K562 (cell line): ENCODE measurements at regions of chrX and their contacts with region 1.

Region 1: GRCh38 chrX:119036107-119037029 is 36.4 kb upstream of the CT47C1 start:
- DNase-seq: no peak
- ATAC-seq: no peak
- H3K4me3 ChIP-seq: no peak overlapping the region
- H3K27ac ChIP-seq: no peak overlapping the region
- H3K4me1 ChIP-seq: peaks cover 0 to 6% of the 10 kb centered on the region in 2 experiments; a peak in 2 of 5 replicates
- H3K27me3 ChIP-seq: no peaks in the 10 kb centered on the region
- CTCF ChIP-seq: no peak
- EP300 ChIP-seq: no peak
- POLR2A ChIP-seq: no peak
- RAD21 ChIP-seq: no peak

Region 2: DNA sequence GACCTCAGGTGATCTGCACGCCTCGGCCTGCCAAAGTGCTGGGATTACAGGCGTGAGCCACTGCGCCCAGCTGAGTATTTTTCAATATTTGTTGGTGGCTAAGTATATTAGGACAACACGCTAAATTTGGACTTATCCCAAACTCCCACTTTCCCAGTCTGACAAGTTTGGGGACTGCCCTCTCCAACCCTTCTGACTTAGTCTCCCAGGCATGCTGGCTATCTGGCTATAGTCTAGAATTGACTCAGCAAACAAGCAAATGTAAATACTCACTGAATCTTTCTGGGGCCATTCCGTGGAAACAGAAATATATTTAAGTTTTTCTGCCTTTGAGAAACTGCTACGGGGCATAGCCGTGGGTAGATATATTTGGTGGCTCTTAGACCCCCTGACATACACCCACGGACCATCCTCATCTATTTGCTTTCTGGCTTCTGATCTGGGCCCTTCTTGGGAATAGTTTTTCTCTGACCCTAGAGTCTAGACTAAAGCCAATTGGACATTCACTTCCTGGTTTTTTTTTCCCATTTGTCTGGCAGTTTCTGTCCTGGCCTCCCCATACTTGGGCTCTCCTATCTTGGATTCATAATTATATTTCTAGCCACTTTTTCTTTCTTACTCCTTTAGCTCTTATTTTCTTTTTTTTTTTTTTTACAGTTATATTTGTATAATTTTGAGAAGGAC is 552.0 kb before region 1 on chrX:
- CTCF ChIA-PET with region 1: no interaction called
- POLR2A ChIA-PET with region 1: no interaction called
- in situ Hi-C with region 1: loop called (anchors 5 kb)
- intact Hi-C with region 1: no loop called
- DNase-seq: no peak
- ATAC-seq: peak; percentile 45
- H3K4me3 ChIP-seq: no peak overlapping the region
- H3K27ac ChIP-seq: no peak overlapping the region
- H3K4me1 ChIP-seq: no peaks in the 10 kb centered on the region; a peak in 1 of 5 replicates
- H3K27me3 ChIP-seq: no peaks in the 10 kb centered on the region
- CTCF ChIP-seq: no peak
- EP300 ChIP-seq: no peak
- POLR2A ChIP-seq: no peak
- RAD21 ChIP-seq: no peak

Region 3: DNA sequence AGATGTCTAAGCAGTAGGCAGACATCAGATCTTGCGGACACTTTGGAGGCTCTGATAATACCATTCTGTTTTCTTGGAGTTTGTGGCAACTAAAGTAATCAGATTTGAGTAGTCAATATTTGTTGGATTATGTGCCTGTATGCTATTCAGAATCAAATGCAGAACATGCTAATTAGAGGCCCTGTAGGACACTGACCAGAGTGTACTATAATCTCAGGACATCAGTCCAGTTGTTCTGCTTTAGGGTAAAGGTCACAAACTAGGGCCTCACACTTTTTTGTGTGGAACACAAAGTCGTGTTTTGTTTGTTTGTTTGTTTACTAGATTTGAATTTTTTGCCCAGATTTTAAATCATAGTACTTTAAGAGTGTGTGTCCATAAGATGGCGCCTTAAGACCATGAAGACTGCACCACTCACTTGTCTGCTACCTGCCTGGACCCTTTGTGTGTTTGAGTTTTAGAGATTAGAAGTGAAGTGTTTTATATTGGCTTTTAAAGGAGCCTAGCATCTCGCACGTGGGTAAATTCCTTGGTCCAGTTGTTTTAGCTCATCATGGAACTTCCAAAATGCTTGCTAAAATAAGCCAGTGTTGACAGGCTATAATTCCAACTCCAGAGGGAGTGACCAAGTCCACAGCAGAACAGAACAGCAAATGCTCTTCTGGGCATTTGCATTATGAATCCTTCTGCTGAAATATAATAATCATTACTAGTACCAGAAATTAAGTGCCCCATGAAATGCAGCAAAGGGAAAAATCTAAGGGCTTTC is 274.2 kb before region 1 on chrX:
- CTCF ChIA-PET with region 1: no interaction called
- POLR2A ChIA-PET with region 1: no interaction called
- in situ Hi-C with region 1: no loop called
- intact Hi-C with region 1: no loop called
- DNase-seq: peak in 2 of 4 experiments; percentile 8
- ATAC-seq: peak; percentile 59; the same call in 2 of the 3 replicates
- H3K4me3 ChIP-seq: no peak overlapping the region
- H3K27ac ChIP-seq: no peak overlapping the region
- H3K4me1 ChIP-seq: no peaks in the 10 kb centered on the region
- H3K27me3 ChIP-seq: no peaks in the 10 kb centered on the region
- CTCF ChIP-seq: peak; percentile 16 to 51 (median 18); a peak in 3 of 6 replicates
- EP300 ChIP-seq: no peak
- POLR2A ChIP-seq: no peak
- RAD21 ChIP-seq: peak; percentile 38 to 40; a peak in 3 of 4 replicates

Region 4: DNA sequence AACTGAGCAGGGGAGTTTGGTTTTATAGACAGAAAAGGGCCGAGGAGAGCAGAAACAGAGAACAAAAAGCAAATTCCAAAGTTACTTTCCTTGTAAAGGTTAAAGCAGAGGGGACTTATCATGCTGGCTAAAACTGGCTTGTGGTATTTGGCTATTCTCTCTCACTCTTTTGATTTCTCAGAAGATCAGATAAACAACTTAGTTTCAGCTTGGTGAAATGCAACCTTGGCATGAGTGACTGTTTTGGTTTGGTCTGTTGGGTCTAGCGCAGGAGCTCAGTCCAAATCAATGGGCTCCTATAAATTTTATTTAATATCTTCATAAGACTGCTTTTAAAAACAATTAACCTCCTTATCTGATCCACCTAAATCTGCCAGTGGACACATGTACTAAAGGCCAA is 138.5 kb after region 1 on chrX:
- CTCF ChIA-PET with region 1: no interaction called
- POLR2A ChIA-PET with region 1: no interaction called
- in situ Hi-C with region 1: no loop called
- intact Hi-C with region 1: no loop called
- DNase-seq: no peak
- ATAC-seq: no peak
- H3K4me3 ChIP-seq: no peak overlapping the region
- H3K27ac ChIP-seq: no peak overlapping the region
- H3K4me1 ChIP-seq: no peaks in the 10 kb centered on the region
- H3K27me3 ChIP-seq: no peaks in the 10 kb centered on the region; a peak in 1 of 5 replicates
- CTCF ChIP-seq: no peak
- EP300 ChIP-seq: no peak
- POLR2A ChIP-seq: no peak
- RAD21 ChIP-seq: no peak

Region 5: DNA sequence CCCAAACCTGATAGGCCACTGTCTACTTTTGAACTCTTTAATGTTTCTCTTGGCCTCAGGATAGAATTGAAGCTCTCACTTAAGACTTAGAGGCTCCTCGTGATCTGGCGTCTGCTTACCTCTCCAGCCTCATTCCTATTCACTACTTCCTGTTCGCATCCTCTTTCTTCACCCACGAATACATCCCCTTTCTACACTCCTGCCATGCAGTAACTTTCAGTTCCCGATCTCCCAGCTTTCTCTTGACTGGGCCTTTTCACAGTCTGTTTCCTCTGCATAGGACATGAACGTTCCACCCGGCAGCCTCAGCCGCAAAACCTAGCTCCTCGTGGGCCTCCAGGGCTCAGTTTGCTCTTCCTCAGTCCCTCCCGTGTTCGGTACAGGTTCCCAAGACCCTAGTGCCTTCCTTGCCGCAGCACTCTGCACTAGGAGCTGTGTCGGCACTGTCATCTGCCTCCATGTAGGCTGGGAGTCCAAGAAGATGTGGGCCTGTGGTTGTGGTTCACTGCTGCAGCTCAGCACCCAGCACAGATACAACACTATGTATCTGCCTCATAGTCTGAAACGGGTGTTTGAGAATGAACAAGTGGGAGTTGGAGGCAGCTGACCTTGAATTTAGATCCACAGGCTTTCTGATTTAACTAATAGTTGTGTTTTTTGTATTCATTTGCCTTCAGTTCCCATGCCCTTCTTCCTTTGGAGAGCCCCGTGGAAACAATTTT is 739.3 kb after region 1 on chrX:
- CTCF ChIA-PET with region 1: no interaction called
- POLR2A ChIA-PET with region 1: no interaction called
- in situ Hi-C with region 1: no loop called
- intact Hi-C with region 1: no loop called
- DNase-seq: no peak
- ATAC-seq: no peak
- H3K4me3 ChIP-seq: no peak overlapping the region
- H3K27ac ChIP-seq: no peak overlapping the region
- H3K4me1 ChIP-seq: no peaks in the 10 kb centered on the region; a peak in 1 of 5 replicates
- H3K27me3 ChIP-seq: no peaks in the 10 kb centered on the region
- CTCF ChIP-seq: no peak
- EP300 ChIP-seq: no peak
- POLR2A ChIP-seq: no peak
- RAD21 ChIP-seq: no peak